Caco-2 (cell line): ENCODE measurements at regions of chr14 and their contacts with region 1.

Region 1: DNA sequence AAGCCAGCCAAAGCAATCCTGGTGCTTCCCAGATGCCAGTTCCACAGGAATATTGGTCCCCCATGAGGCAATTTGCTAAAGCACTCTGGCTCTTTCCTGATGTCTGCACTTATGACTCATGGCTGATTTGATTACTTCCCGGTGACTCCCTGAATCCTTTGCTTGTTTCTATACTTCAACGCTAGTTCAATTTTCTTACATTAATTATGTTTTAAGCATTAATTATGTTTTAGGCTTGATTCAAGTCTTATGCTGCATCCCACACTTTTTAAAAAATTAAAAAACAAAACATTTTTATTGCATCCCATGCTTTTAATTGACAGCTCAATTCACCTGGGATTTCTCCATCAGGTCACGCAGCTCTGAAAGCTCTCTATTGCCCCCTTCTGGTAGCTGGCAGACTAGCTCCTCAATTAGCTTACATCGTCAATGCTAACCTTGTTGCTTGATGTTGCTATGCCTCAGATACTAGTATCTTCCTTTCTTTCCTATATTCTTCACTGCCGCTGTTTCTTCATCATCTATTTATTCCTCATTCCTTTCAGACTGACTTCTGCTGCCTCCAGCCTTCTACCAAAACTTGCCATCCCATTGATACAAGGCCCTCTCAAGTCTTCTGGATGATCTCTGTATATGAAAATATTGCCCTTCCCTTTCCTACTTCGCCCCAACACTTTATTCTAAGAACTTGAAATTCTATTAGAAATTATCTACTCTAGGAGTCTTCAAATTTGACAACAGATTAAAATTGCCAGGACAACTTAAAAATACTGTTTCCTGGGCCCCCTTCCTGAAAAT is 32.0 kb downstream of the TSHR start:
- DNase-seq: peak; percentile 57 to 74
- H3K4me3 ChIP-seq: no peak overlapping the region
- H3K4me3 Mint-ChIP-seq: no peak overlapping the region
- H3K27ac Mint-ChIP-seq: no peak overlapping the region
- H3K4me1 ChIP-seq: no peaks in the 10 kb centered on the region
- H3K4me1 Mint-ChIP-seq: no peaks in the 10 kb centered on the region
- H3K27me3 ChIP-seq: no peaks in the 10 kb centered on the region
- H3K27me3 Mint-ChIP-seq: peaks cover 10% of the 10 kb centered on the region
- CTCF ChIP-seq: peak; percentile 81 to 92

Region 2: DNA sequence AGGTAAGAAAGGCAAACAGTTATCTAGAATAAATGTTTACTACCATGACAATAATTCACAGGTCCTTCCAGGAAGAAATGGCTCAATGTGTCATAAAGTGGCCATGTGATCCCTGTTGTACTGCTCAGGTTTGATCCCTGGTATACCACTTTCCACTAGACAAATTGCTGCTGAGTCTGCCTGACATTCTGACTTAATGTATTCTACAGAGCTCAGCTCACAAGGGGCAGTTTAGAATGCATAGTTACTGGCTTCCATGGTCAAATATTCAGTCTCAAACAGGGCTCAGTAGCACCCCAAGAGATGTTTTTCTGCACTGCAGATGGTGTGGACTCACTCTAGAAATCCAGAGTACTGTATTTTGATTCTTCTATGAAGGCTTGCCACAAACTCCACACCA is 10.2 kb before region 1 on chr14:
- CTCF ChIA-PET with region 1: interaction called, 11 read pairs
- POLR2A ChIA-PET with region 1: no interaction called
- intact Hi-C with region 1: no loop called
- DNase-seq: no peak
- H3K4me3 ChIP-seq: no peak overlapping the region
- H3K4me3 Mint-ChIP-seq: no peak overlapping the region
- H3K27ac Mint-ChIP-seq: no peak overlapping the region
- H3K4me1 ChIP-seq: no peaks in the 10 kb centered on the region
- H3K4me1 Mint-ChIP-seq: peaks cover 16% of the 10 kb centered on the region
- H3K27me3 ChIP-seq: no peaks in the 10 kb centered on the region; the same call in 1 of the 2 replicates
- H3K27me3 Mint-ChIP-seq: no peaks in the 10 kb centered on the region
- CTCF ChIP-seq: no peak

Region 3: GRCh38 chr14:81042438-81042837 is 55.0 kb after region 1 on chr14:
- CTCF ChIA-PET with region 1: no interaction called
- POLR2A ChIA-PET with region 1: no interaction called
- intact Hi-C with region 1: no loop called
- DNase-seq: no peak
- H3K4me3 ChIP-seq: no peak overlapping the region
- H3K4me3 Mint-ChIP-seq: no peak overlapping the region
- H3K27ac Mint-ChIP-seq: no peak overlapping the region
- H3K4me1 ChIP-seq: no peaks in the 10 kb centered on the region
- H3K4me1 Mint-ChIP-seq: no peaks in the 10 kb centered on the region
- H3K27me3 ChIP-seq: no peaks in the 10 kb centered on the region
- H3K27me3 Mint-ChIP-seq: peaks cover 14% of the 10 kb centered on the region
- CTCF ChIP-seq: no peak